Breast epithelium (tissue), 4 donors: ENCODE measurements at regions of chr4 and their contacts with region 1.

Region 1: DNA sequence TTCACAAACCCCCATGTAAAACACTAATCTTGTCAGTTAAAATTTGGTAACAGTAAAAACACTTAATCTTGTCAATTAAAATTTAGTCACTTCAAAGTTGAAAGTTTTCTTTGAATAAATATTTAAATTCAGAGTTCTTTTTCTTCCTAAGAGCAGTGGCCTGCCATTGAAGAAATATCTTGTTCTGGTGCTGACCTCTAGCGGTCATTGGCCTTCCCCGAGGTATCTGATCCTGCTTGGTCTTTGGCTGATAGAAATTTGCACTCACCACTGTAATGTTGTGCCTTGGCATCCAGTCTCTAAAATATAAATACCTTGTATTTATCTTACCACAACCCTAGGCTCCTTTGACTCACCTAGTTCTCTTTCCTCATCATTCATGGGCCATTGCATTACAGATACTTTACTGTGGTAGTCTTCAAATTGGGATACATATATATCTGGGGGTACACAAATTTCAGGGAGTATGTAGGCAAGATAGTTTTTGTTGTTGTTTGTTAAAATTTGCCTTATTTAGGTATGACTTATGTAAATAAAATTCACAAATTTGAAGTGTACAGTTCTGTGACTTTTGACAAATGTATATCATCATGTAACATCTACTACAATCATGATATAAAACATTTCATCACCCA is 6.7 kb upstream of the ART3 start:
- DNase-seq: peak in 1 of 2 donors; percentile 64
- H3K4me3 ChIP-seq: no peak overlapping the region
- H3K27ac ChIP-seq: no peak overlapping the region
- H3K4me1 ChIP-seq: no peaks in the 10 kb centered on the region
- H3K27me3 ChIP-seq: no peaks in the 10 kb centered on the region
- CTCF ChIP-seq: peak; percentile 51 to 70 (median 62)
- POLR2A ChIP-seq: no peak

Region 2: GRCh38 chr4:75995727-75996126 is 72.0 kb before region 1 on chr4:
- intact Hi-C with region 1: loop called (anchors 2 kb)
- DNase-seq: no peak
- H3K4me3 ChIP-seq: no peak overlapping the region
- H3K27ac ChIP-seq: no peak overlapping the region
- H3K4me1 ChIP-seq: no peaks in the 10 kb centered on the region
- H3K27me3 ChIP-seq: no peaks in the 10 kb centered on the region
- CTCF ChIP-seq: peak; percentile 13 to 61 (median 45)
- POLR2A ChIP-seq: no peak

Region 3: DNA sequence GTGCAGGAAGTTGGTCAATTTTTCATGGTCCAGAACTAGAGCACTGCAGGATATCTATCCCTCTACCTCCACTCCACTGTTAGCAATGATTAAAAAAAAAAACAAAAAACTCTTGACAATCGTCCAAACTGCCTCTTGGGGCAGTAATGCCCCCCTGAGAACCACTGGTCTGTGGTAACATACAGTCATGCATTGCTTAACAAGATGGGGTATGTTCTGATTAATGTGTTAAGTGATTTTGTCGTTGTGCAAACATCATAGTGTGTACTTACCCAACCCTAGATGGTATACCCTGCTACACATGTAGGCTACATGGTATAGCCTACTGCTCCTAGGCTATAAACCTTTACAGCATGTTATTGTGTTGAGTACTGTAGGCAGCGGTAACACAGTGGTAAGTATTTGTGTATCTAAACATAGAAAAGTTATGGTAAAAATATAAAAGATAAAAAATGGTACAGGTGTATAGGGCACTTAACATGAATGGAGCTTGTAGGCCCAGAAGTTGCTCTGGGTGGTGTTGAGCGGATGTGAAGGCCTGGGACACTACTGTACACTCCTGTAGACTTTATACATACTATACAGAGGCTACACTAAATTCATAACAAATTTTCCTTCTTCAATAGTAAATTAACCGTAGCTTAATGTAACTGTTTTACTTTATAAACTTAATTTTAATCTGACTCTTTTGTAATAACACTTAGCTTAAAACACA is 40.9 kb after region 1 on chr4:
- intact Hi-C with region 1: loop called (anchors 2 kb)
- DNase-seq: no peak
- H3K4me3 ChIP-seq: no peak overlapping the region
- H3K27ac ChIP-seq: no peak overlapping the region
- H3K4me1 ChIP-seq: no peaks in the 10 kb centered on the region
- H3K27me3 ChIP-seq: no peaks in the 10 kb centered on the region
- CTCF ChIP-seq: no peak
- POLR2A ChIP-seq: no peak